AG04450 (cell line): ENCODE measurements at regions of chr18 and their contacts with region 1.

Region 1: DNA sequence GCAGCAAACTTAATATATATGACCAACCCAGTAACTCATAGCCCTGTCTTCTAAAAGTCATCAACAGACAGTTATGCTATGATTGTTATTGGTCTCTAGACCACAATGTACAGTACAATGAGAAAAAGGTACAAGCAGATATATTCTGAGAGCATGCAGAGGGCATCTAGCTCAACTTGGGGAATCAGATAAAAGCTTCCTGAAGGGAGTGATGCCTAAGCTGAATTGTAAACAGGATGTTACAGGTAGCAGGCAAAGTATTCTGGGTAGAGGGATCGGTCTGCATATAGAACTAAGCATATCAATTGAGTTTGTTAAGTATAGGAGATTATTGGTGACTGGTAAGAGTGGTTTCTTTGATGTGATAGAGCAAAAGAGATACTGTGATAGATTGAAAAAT is 30.3 kb downstream of the ME2 start:
- DNase-seq: no peak
- H3K4me3 ChIP-seq: no peak overlapping the region
- H3K27ac ChIP-seq: no peak overlapping the region
- H3K27me3 ChIP-seq: no peaks in the 10 kb centered on the region
- CTCF ChIP-seq: no peak

Region 2: GRCh38 chr18:51506811-51507210 is 597.5 kb after region 1 on chr18:
- CTCF ChIA-PET with region 1: interaction called, 13 read pairs
- POLR2A ChIA-PET with region 1: no interaction called
- DNase-seq: no peak
- H3K4me3 ChIP-seq: no peak overlapping the region
- H3K27ac ChIP-seq: no peak overlapping the region
- H3K27me3 ChIP-seq: no peaks in the 10 kb centered on the region
- CTCF ChIP-seq: no peak